CD8-positive, alpha-beta memory T cell (primary cell): ENCODE measurements at regions of chr1 and their contacts with region 1.

Region 1: GRCh38 chr1:173714759-173715537 is at the start of gene KLHL20:
- DNase-seq: peak; percentile 74 to 89 (median 89)
- H3K4me3 ChIP-seq: peak within 1 kb of the TSS; percentile 77
- H3K4me3 Mint-ChIP-seq: peak within 1 kb of the TSS; percentile 88 to 99 (median 93)
- H3K27ac ChIP-seq: peak within 1 kb of the TSS; percentile 87
- H3K27ac Mint-ChIP-seq: peak within 1 kb of the TSS; percentile 71 to 99 (median 95)
- H3K4me1 ChIP-seq: peaks cover 26% of the 10 kb centered on the region
- H3K4me1 Mint-ChIP-seq: peaks cover 32 to 44% (median 34%) of the 10 kb centered on the region in 3 donors
- H3K27me3 ChIP-seq: peaks cover 6% of the 10 kb centered on the region
- H3K27me3 Mint-ChIP-seq: peaks cover 12 to 18% of the 10 kb centered on the region in 2 donors
- total RNA-seq, gene KLHL20: 19.7 to 20.5 TPM

Region 2: DNA sequence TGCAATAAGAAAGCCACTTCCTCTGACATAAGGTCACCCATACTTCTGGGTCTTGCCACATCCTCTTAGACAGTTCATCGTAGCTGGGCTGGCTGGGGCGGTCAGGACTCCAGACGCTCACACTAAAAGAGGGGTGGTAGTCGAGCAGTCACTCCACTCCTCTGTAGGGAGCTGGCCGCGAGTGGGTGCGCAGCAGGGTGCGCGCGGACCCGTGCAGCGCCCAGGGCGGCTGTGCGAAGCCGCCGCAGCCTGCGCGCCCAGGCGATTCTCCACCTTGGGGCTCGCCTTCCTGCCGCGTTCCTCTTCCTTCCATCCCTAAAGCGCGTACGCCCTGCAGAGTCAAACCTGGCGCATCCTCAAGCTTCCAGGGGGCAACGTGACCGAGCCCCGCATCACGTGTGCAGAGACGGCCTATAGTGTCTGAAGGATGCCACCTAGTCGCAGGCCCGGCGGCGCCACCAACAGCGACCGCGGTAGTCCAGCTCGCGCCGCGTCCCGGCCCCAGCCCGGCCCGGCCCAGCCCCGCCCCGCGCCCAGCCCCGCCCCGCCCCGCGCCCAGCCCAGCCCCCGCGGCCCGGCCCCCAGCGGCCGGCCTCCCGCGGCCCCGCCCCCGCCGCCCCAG is 238.2 kb before region 1 on chr1:
- CTCF ChIA-PET with region 1: interaction called, 5 read pairs
- POLR2A ChIA-PET with region 1: interaction called, 12 read pairs
- DNase-seq: peak; percentile 78 to 89 (median 80)
- H3K4me3 ChIP-seq: peak overlapping the region; percentile 93
- H3K4me3 Mint-ChIP-seq: peak overlapping the region; percentile 88 to 97 (median 93)
- H3K27ac ChIP-seq: peak overlapping the region; percentile 93
- H3K27ac Mint-ChIP-seq: peak overlapping the region; percentile 92 to 97 (median 94)
- H3K4me1 ChIP-seq: peaks cover 40% of the 10 kb centered on the region
- H3K4me1 Mint-ChIP-seq: peaks cover 58 to 79% (median 76%) of the 10 kb centered on the region in 3 donors
- H3K27me3 ChIP-seq: no peaks in the 10 kb centered on the region
- H3K27me3 Mint-ChIP-seq: no peaks in the 10 kb centered on the region